Activated CD4-positive, alpha-beta memory T cell treated with anti-CD3 and anti-CD28 coated beads, Interleukin-2, amount 10 ng/mL, durations not matched to agents 7 days and 5 days (primary cell): ENCODE measurements at regions of chr3 and their contacts with region 1.

Region 1: GRCh38 chr3:157136647-157137387 is 23.1 kb downstream of the CCNL1 start:
- DNase-seq: no peak
- H3K4me3 Mint-ChIP-seq: no peak overlapping the region
- H3K27ac Mint-ChIP-seq: peak overlapping the region; percentile 89
- H3K4me1 Mint-ChIP-seq: peaks cover 61% of the 10 kb centered on the region
- H3K27me3 Mint-ChIP-seq: no peaks in the 10 kb centered on the region

Region 2: GRCh38 chr3:156151824-156152428 is 984.9 kb before region 1 on chr3:
- CTCF ChIA-PET with region 1: interaction called, 32 read pairs
- POLR2A ChIA-PET with region 1: no interaction called
- DNase-seq: peak; percentile 67
- H3K4me3 Mint-ChIP-seq: no peak overlapping the region
- H3K27ac Mint-ChIP-seq: no peak overlapping the region
- H3K4me1 Mint-ChIP-seq: peaks cover 7% of the 10 kb centered on the region
- H3K27me3 Mint-ChIP-seq: peaks cover 3% of the 10 kb centered on the region

Region 3: GRCh38 chr3:156519758-156520162 is 617.1 kb before region 1 on chr3:
- CTCF ChIA-PET with region 1: interaction called, 20 read pairs
- POLR2A ChIA-PET with region 1: interaction called, 3 read pairs
- DNase-seq: no peak
- H3K4me3 Mint-ChIP-seq: no peak overlapping the region
- H3K27ac Mint-ChIP-seq: no peak overlapping the region
- H3K4me1 Mint-ChIP-seq: peaks cover 44% of the 10 kb centered on the region
- H3K27me3 Mint-ChIP-seq: peaks cover 14% of the 10 kb centered on the region

Region 4: GRCh38 chr3:156594219-156594683 is 542.6 kb before region 1 on chr3:
- CTCF ChIA-PET with region 1: no interaction called
- POLR2A ChIA-PET with region 1: no interaction called
- DNase-seq: no peak
- H3K4me3 Mint-ChIP-seq: no peak overlapping the region
- H3K27ac Mint-ChIP-seq: no peak overlapping the region
- H3K4me1 Mint-ChIP-seq: peaks cover 2% of the 10 kb centered on the region
- H3K27me3 Mint-ChIP-seq: peaks cover 22% of the 10 kb centered on the region

Region 5: DNA sequence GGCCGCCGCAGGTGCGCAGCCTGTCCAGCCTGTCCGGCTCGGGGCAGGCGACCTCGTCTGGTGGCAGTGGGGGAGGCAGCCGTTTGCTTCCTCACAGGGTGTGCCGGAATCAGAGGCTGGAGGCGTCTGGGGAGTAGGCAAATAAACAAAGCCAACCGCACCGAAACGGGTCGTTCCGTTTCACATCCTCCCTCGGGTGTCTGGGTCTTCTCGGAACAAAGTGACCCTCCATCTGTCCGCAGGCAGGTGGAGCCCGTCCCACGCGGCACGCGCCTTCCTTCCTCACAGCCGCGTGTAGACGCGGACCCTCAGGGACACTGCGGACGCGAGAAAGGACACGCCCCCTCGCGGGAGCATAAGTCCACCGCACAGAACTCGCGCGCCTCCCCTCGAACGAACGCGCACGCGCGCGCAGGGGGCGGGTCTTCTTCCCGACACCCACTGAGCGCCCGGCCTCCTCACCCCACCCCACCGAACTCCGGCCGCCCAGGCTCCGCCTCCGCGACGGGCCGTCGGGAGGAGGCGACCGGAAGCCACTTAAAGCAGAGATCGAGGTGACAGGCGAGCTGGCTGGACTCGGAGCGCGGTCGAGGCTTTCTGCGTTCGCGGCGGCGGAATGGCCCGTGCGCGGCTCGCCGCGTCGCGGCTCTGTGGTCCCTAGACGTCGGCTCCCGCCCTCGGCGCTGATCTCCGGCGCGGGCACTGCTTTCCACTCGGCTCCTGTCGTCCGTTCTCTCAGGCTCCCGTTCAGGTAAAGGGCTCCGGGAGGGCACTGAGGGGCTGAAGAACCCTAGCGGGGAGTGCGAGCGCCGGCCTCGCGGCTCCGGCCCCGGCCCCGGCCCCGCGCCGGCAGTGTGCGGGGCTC is 462.5 kb before region 1 on chr3 and contains the start of gene TIPARP:
- CTCF ChIA-PET with region 1: interaction called, 26 read pairs
- POLR2A ChIA-PET with region 1: interaction called, 162 read pairs
- DNase-seq: peak; percentile 99
- H3K4me3 Mint-ChIP-seq: peak within 1 kb of the TSS; percentile 86
- H3K27ac Mint-ChIP-seq: peak within 1 kb of the TSS; percentile 96
- H3K4me1 Mint-ChIP-seq: peaks cover 47% of the 10 kb centered on the region
- H3K27me3 Mint-ChIP-seq: no peaks in the 10 kb centered on the region
- total RNA-seq, gene TIPARP: 64.7 to 73.8 TPM

Region 6: GRCh38 chr3:157067114-157067513 is 69.7 kb before region 1 on chr3:
- CTCF ChIA-PET with region 1: interaction called, 10 read pairs
- POLR2A ChIA-PET with region 1: no interaction called
- DNase-seq: peak; percentile 62
- H3K4me3 Mint-ChIP-seq: no peak overlapping the region
- H3K27ac Mint-ChIP-seq: peak overlapping the region; percentile 47
- H3K4me1 Mint-ChIP-seq: peaks cover 30% of the 10 kb centered on the region
- H3K27me3 Mint-ChIP-seq: peaks cover 3% of the 10 kb centered on the region

Region 7: DNA sequence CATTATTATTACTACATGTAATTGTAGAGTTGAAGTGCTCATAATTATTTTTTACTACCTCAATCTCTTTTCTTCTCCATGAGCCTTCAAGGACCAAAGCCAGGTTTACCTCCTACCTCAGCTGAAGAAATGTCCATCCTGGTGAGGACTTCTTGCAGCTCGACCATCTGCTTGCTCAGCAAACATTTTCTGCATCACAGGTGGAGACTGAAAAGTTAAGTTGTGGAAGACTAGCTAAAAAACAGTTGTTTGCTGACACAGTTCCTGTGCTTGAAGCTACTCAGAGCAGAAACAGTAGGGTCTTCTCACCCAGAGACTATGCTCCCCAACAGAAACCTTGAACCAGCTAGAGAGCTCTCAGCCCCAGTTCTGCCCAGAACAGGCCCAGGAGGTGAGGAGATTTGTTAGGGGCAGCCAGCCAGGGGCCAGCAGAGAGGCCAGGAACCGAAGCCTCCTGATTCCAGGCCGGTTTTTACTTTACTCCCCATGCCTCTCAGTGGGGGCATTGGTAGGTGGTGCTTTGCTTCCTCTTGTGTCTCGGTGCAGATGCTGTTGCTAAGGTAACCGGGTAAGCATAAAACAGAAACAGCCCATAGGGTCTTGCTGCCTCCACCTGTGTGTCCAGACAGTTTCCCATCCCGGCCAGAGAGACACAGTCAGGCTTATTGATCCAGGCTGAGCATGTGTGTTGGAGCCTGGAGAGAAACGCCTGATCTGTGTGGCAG is 31.7 kb before region 1 on chr3:
- CTCF ChIA-PET with region 1: interaction called, 12 read pairs
- POLR2A ChIA-PET with region 1: interaction called, 3 read pairs
- DNase-seq: no peak
- H3K4me3 Mint-ChIP-seq: no peak overlapping the region
- H3K27ac Mint-ChIP-seq: peak overlapping the region; percentile 83
- H3K4me1 Mint-ChIP-seq: peaks cover 50% of the 10 kb centered on the region
- H3K27me3 Mint-ChIP-seq: no peaks in the 10 kb centered on the region

Region 8: GRCh38 chr3:157148196-157148889 is 11.5 kb after region 1 on chr3:
- CTCF ChIA-PET with region 1: interaction called, 45 read pairs
- POLR2A ChIA-PET with region 1: interaction called, 16 read pairs
- DNase-seq: no peak
- H3K4me3 Mint-ChIP-seq: no peak overlapping the region
- H3K27ac Mint-ChIP-seq: peak overlapping the region; percentile 54
- H3K4me1 Mint-ChIP-seq: peaks cover 62% of the 10 kb centered on the region
- H3K27me3 Mint-ChIP-seq: no peaks in the 10 kb centered on the region